ENCODE measurements at regions of chr1 and their contacts with region 1.

Region 1: GRCh38 chr1:25997828-25998761 is at the start of gene PAFAH2:
- DNase-seq: peak; percentile 91
- H3K4me3 ChIP-seq: peak within 1 kb of the TSS; percentile 69
- H3K27ac ChIP-seq: 0 out of 2 replicates have a peak within 1 kb of the TSS, but pooled peaks have one; percentile 1
- H3K4me1 ChIP-seq: peaks cover 12% of the 10 kb centered on the region
- H3K27me3 ChIP-seq: no peaks in the 10 kb centered on the region
- CTCF ChIP-seq: peak; percentile 85
- total RNA-seq, gene PAFAH2: 13.0 and 13.9 TPM in 2 replicates

Region 2: DNA sequence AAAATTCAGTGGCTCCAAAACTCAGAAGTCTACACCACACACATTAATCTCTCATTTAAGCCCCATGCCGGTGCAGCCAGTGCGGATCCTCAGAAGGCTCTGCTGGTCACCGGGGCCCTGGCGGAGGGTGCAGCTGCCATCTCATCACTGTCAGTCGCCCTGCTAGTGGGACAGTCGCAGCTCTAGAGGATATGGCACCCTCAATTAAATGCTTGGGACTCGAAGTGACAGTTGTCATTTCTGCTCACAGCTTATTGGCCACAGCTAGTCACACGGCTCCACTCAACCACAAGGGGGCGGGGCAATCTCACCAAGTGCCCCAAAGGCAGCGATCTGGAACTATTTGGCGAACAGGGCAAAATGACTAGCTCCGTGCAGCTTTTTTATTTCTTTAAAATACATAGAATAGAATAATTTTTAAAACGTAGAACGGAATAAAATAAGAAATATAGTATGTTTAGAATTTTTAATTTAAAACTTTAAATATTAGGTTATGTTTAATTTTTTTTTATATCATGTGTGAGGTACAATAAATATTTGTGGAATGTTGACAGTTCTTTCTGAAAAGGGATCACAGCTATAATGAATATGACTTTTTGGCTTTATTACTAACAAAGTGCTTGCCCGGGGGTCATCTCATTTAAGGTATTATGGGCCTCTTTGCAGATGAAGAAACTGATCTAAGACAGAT is 389.5 kb before region 1 on chr1:
- CTCF ChIA-PET with region 1: no interaction called
- POLR2A ChIA-PET with region 1: no interaction called
- intact Hi-C with region 1: loop called (anchors 5 kb)
- DNase-seq: peak; percentile 43 to 69
- H3K4me3 ChIP-seq: no peak overlapping the region
- H3K27ac ChIP-seq: no peak overlapping the region
- H3K4me1 ChIP-seq: peaks cover 5% of the 10 kb centered on the region; the same call in 1 of the 2 replicates
- H3K27me3 ChIP-seq: no peaks in the 10 kb centered on the region
- CTCF ChIP-seq: peak; percentile 63

Region 3: GRCh38 chr1:25819576-25820246 is 178.4 kb before region 1 on chr1 and contains the start of gene MTFR1L:
- CTCF ChIA-PET with region 1: no interaction called
- POLR2A ChIA-PET with region 1: interaction called, 4 read pairs
- intact Hi-C with region 1: loop called (anchors 1 kb)
- DNase-seq: peak; percentile 70 to 92
- H3K4me3 ChIP-seq: peak within 1 kb of the TSS; percentile 83
- H3K27ac ChIP-seq: peak within 1 kb of the TSS; percentile 69
- H3K4me1 ChIP-seq: peaks cover 16% of the 10 kb centered on the region
- H3K27me3 ChIP-seq: no peaks in the 10 kb centered on the region
- CTCF ChIP-seq: no peak
- total RNA-seq, gene MTFR1L: 40.9 and 41.7 TPM in 2 replicates

Region 4: DNA sequence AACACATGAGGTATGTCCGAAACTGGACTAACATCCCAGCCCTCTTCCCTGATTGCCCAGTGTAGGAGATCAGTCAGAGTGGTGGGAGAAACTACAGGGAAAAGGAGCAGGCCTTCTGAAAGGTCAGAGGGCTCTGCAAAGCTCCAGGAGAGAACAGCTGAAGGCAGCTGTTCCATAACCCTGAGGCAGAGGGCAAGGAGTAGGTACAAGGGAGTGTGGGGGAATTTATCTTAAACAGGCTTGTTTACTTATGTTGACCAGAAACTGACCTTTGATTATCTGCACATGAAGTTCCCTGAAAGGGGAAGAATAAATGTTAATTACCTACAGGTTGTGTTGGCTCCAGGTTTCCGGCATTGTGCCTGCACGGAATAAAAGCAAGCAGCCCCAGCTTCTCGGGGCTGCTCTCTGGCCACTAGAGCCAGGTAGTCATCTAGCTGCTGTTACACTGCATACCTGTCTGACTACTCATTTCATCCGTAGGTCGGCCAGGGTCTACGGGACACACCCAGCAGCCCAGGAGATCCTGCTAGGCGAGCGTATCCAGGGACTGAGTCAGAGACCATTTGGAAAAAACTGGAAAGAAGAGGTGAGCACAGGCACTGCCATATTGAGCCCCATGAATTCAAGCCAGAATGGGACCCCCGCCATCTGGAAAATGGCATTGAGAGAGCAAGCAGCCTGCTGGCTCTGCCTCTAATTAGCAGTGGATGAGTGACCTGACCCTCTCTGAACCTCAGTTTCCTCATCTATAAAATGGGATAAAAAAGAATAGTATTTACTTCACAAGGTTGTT is 107.7 kb before region 1 on chr1:
- CTCF ChIA-PET with region 1: interaction called, 25 read pairs
- POLR2A ChIA-PET with region 1: interaction called, 3 read pairs
- intact Hi-C with region 1: loop called (anchors 1 kb)
- DNase-seq: peak; percentile 91 to 97
- H3K4me3 ChIP-seq: peak overlapping the region; percentile 47
- H3K27ac ChIP-seq: peak overlapping the region; percentile 96
- H3K4me1 ChIP-seq: peaks cover 61% of the 10 kb centered on the region
- H3K27me3 ChIP-seq: no peaks in the 10 kb centered on the region
- CTCF ChIP-seq: no peak

Region 5: DNA sequence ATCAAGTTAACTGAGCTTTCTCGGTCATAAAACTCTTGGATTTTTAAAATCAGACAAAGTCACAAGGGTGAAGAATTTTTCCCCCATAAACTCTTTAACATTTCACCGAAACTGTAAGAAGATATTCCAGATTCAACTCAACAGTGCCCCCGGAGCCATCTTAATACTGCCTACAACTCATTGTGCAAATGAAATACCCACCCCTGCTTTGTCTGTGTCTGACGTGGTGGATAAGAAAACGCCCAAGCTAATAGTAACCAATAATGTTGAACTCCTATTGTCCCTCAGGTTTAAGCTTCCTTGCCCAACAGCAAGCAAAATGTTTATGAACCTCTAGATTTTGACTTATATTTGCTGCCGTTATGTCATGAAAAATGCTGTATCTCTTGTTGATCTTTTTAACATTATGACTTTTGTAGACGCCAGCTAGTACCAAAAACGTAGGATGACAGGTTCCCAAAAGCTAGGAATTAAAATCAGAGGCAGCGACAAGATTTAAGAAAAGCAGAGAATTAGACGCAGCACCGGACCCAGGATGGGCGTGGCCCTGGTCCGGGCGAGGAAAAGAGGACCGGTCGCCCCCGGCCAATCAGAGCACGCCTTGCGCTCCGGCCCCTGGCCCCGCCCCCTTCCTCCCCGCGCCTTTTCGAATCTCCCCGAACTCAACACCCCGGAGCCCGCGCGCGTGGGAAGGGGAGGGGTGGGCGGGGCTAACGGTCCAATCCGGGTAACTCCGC is 93.0 kb before region 1 on chr1:
- CTCF ChIA-PET with region 1: interaction called, 3 read pairs
- POLR2A ChIA-PET with region 1: no interaction called
- intact Hi-C with region 1: loop called (anchors 2 kb)
- DNase-seq: peak in 1 of 2 experiments; percentile 89
- H3K4me3 ChIP-seq: peak overlapping the region; percentile 92
- H3K27ac ChIP-seq: no peak overlapping the region
- H3K4me1 ChIP-seq: peaks cover 15% of the 10 kb centered on the region
- H3K27me3 ChIP-seq: no peaks in the 10 kb centered on the region
- CTCF ChIP-seq: no peak

Region 6: DNA sequence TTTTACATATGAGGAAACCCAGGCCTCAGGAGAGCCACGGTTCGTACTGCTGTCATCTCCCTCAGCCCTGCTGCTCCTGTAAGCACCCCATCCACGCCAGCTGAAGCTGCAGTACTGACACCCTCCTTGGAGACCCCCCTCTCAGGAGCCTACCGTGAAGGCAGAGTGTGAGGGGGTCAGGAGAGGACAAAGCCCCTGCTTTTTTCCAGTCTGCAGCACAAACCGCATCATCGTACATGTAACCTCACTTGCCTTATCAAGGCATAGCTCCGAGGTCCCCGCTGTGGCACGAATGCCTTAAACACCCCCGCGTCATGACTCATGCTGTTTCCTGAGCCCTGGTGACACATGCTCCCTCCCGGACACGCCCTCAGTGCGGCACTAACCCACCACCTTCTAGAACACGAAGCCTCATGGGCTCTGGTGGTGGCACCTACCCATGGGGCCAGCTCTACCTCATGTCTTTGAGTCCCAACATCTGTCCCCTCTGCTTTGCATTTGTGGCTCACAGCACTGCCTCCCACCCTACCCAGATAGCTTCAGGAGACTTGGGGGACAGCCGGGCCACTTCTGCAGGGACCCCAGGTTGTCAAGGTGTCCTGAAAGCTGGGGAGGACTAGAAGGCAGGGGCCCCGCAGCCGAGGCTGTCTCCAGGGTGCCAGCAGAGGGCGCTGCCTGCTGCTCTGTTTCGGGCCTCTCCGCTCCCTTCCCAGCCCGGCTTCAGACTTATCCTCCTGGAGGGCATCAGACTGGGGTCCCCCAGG is 286.7 kb after region 1 on chr1:
- CTCF ChIA-PET with region 1: no interaction called
- POLR2A ChIA-PET with region 1: no interaction called
- intact Hi-C with region 1: no loop called
- DNase-seq: peak; percentile 83 to 84
- H3K4me3 ChIP-seq: no peak overlapping the region
- H3K27ac ChIP-seq: no peak overlapping the region
- H3K4me1 ChIP-seq: peaks cover 15% of the 10 kb centered on the region
- H3K27me3 ChIP-seq: no peaks in the 10 kb centered on the region
- CTCF ChIP-seq: peak; percentile 65

Region 7: DNA sequence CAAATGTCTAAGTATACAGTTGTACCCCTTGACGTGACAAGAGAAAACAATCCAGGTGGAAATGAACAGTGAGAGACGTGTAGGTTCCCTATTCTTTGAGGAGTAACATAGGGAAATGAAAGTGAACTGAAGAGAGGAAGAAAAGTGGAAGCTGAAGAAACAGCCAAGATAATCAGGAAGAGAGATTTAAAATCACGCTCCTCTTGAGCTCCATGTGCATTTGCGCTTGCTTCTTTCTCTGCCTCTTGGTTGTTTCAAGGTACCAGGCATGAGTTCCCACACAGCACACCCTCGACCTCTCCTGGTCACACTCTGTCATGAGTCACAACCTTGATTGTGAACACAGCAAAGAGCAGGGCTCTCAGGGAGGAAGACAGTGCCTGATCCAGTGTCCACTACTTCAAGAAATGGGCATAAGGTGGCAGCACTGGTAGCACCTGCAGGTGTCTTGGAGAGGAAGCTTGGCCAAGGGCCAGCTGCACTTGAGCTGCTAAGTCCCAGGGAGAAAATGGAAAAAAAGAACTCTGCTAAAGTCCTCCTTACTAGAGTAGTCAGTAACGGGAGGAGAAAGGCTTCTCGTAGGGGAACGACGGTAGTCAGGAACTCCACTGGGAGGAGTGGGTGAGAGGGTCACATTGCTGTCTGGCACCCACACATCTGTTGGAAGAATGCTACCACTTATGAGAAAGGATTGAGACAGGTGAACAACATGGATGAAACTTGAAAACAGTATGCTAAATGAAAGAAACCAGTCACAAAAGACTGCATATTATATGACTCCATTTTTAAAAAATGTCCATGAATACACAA is 679.4 kb after region 1 on chr1:
- CTCF ChIA-PET with region 1: no interaction called
- POLR2A ChIA-PET with region 1: interaction called, 19 read pairs
- intact Hi-C with region 1: no loop called
- DNase-seq: peak; percentile 86 to 91
- H3K4me3 ChIP-seq: no peak overlapping the region
- H3K27ac ChIP-seq: no peak overlapping the region
- H3K4me1 ChIP-seq: peaks cover 11% of the 10 kb centered on the region; the same call in 1 of the 2 replicates
- H3K27me3 ChIP-seq: no peaks in the 10 kb centered on the region
- CTCF ChIP-seq: peak; percentile 71

Measured in PC-9 (cell line).